ENCODE measurements at regions of chr14 and their contacts with region 1.

Region 1: DNA sequence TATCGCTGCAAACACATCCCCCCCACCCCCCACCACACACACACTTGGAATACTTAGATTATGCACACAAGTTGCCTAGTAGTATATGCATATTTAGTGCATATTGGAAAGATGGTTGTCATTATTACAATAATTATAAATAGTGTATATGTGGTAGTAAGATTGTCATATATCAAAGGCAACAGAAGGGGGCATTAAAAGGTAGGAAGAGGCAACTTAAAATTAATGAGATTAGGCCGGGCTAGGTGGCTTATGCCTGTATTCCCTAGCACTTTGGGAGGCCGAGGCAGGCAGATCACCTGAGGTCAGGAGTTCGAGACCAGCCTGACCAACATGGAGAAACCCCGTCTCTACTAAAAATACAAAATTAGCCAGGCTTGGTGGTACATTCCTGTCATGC is 52.1 kb downstream of the GSC start:
- DNase-seq: no peak
- ATAC-seq: peak; percentile 55; the same call in 1 of the 2 replicates
- H3K4me3 ChIP-seq: no peak overlapping the region
- H3K27ac ChIP-seq: no peak overlapping the region
- H3K4me1 ChIP-seq: no peaks in the 10 kb centered on the region
- H3K27me3 ChIP-seq: no peaks in the 10 kb centered on the region
- CTCF ChIP-seq: peak; percentile 6 to 32 (median 19); a peak in 2 of 6 replicates
- POLR2A ChIP-seq: no peak
- RAD21 ChIP-seq: peak; percentile 62

Region 2: DNA sequence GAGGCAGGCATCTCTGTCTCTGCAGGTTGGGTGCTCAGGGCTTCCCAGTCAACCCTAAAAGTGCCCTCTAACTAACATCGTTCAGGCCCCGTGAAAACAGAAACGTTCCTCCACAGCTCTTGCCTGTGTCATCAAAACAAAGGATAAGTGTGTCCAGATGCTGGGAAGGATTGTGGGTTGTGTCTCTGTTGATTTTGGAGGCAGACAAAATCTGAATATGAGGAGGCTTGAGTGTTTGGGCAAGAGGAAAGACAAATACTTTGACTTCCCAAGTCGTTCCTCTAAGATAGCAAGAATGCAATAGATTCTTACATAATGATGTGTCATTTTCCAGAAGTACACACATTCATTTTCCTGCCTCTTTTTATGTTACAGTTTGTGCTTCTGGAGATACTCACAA is 52.7 kb before region 1 on chr14:
- CTCF ChIA-PET with region 1: no interaction called
- POLR2A ChIA-PET with region 1: no interaction called
- RAD21 ChIA-PET with region 1: no interaction called
- intact Hi-C with region 1: no loop called
- DNase-seq: no peak
- ATAC-seq: no peak
- H3K4me3 ChIP-seq: no peak overlapping the region
- H3K27ac ChIP-seq: no peak overlapping the region
- H3K4me1 ChIP-seq: no peaks in the 10 kb centered on the region
- H3K27me3 ChIP-seq: peaks cover 8% of the 10 kb centered on the region; the same call in 1 of the 2 replicates
- CTCF ChIP-seq: no peak
- POLR2A ChIP-seq: no peak
- RAD21 ChIP-seq: no peak

Region 3: GRCh38 chr14:95106971-95107370 is 389.2 kb after region 1 on chr14:
- CTCF ChIA-PET with region 1: no interaction called
- POLR2A ChIA-PET with region 1: no interaction called
- RAD21 ChIA-PET with region 1: no interaction called
- intact Hi-C with region 1: loop called (anchors 10 kb)
- DNase-seq: no peak
- ATAC-seq: no peak
- H3K4me3 ChIP-seq: no peak overlapping the region
- H3K27ac ChIP-seq: no peak overlapping the region
- H3K4me1 ChIP-seq: no peaks in the 10 kb centered on the region
- H3K27me3 ChIP-seq: no peaks in the 10 kb centered on the region
- CTCF ChIP-seq: no peak
- POLR2A ChIP-seq: no peak
- RAD21 ChIP-seq: no peak